ENCODE measurements at regions of chr2 and their contacts with region 1.

Region 1: GRCh38 chr2:50492477-50492851 is 539.5 kb downstream of the NRXN1 start:
- DNase-seq: peak in 10 of 35 experiments; percentile 0 to 53 (median 6)
- ATAC-seq: peak; percentile 31 to 65 (median 50)
- H3K4me3 ChIP-seq: no peak overlapping the region
- H3K4me3 Mint-ChIP-seq: peak overlapping the region in 1 of 3 donors; percentile 24
- H3K27ac ChIP-seq: no peak overlapping the region
- H3K27ac Mint-ChIP-seq: no peak overlapping the region
- H3K4me1 ChIP-seq: no peaks in the 10 kb centered on the region
- H3K4me1 Mint-ChIP-seq: peaks cover 6 to 22% (median 12%) of the 10 kb centered on the region in 3 donors
- H3K27me3 ChIP-seq: no peaks in the 10 kb centered on the region
- H3K27me3 Mint-ChIP-seq: peaks cover 3 to 5% of the 10 kb centered on the region in 2 donors

Region 2: GRCh38 chr2:48946449-48947048 is 1545.9 kb before region 1 on chr2:
- CTCF ChIA-PET with region 1: interaction called in 1 of 2 experiments, 12 read pairs
- POLR2A ChIA-PET with region 1: no interaction called
- DNase-seq: peak in 21 of 35 experiments; percentile 1 to 48 (median 12)
- ATAC-seq: peak; percentile 40 to 69 (median 60)
- H3K4me3 ChIP-seq: no peak overlapping the region
- H3K4me3 Mint-ChIP-seq: no peak overlapping the region
- H3K27ac ChIP-seq: no peak overlapping the region
- H3K27ac Mint-ChIP-seq: no peak overlapping the region
- H3K4me1 ChIP-seq: no peaks in the 10 kb centered on the region
- H3K4me1 Mint-ChIP-seq: no peaks in the 10 kb centered on the region
- H3K27me3 ChIP-seq: no peaks in the 10 kb centered on the region
- H3K27me3 Mint-ChIP-seq: no peaks in the 10 kb centered on the region

Region 3: DNA sequence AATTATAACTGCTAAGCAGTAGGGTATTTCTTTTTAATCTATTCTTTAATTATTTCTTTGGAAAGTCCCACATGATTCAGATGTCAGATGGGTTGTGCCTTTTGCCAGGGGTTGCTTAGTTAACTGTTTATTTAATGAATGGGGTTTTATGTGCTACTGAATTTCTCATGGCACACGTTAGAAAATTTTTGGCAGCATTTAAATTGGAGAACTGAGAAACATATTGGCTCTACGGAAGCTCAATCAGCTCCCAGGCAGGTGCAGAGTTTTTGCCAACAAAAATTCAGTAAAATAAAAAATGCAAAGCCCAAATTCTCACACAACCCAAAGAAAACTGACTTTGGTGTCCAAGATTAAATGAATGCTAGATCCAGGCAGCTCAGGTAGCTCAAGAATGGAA is 72.3 kb after region 1 on chr2:
- CTCF ChIA-PET with region 1: no interaction called
- POLR2A ChIA-PET with region 1: no interaction called
- DNase-seq: no peak
- ATAC-seq: no peak
- H3K4me3 ChIP-seq: no peak overlapping the region
- H3K4me3 Mint-ChIP-seq: no peak overlapping the region
- H3K27ac ChIP-seq: no peak overlapping the region
- H3K27ac Mint-ChIP-seq: no peak overlapping the region
- H3K4me1 ChIP-seq: no peaks in the 10 kb centered on the region
- H3K4me1 Mint-ChIP-seq: no peaks in the 10 kb centered on the region
- H3K27me3 ChIP-seq: no peaks in the 10 kb centered on the region
- H3K27me3 Mint-ChIP-seq: peaks cover 0 to 3% of the 10 kb centered on the region in 2 donors

Region 4: DNA sequence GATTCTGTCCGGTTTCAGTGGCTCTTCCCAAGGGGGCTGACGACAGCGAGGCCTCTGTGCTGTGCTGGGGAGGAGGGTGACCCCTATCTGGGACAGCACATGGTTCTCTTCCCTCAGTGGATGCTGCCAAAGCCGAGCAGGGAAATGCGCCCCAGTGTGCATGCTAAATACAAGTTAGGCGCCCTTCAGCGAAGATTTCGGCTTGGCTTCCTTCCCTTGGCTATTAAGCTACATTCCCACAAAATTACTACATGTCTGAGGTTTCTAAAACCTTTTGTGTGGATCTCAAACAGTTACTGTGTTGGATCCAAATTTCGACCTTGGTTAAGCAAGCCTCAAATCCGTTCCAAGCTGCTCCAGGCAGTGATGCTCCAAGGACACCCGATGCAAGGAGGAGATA is 99.2 kb after region 1 on chr2:
- CTCF ChIA-PET with region 1: no interaction called
- POLR2A ChIA-PET with region 1: no interaction called
- DNase-seq: no peak
- ATAC-seq: no peak
- H3K4me3 ChIP-seq: no peak overlapping the region
- H3K4me3 Mint-ChIP-seq: no peak overlapping the region
- H3K27ac ChIP-seq: no peak overlapping the region
- H3K27ac Mint-ChIP-seq: no peak overlapping the region
- H3K4me1 ChIP-seq: no peaks in the 10 kb centered on the region
- H3K4me1 Mint-ChIP-seq: no peaks in the 10 kb centered on the region
- H3K27me3 ChIP-seq: no peaks in the 10 kb centered on the region
- H3K27me3 Mint-ChIP-seq: no peaks in the 10 kb centered on the region

Region 5: DNA sequence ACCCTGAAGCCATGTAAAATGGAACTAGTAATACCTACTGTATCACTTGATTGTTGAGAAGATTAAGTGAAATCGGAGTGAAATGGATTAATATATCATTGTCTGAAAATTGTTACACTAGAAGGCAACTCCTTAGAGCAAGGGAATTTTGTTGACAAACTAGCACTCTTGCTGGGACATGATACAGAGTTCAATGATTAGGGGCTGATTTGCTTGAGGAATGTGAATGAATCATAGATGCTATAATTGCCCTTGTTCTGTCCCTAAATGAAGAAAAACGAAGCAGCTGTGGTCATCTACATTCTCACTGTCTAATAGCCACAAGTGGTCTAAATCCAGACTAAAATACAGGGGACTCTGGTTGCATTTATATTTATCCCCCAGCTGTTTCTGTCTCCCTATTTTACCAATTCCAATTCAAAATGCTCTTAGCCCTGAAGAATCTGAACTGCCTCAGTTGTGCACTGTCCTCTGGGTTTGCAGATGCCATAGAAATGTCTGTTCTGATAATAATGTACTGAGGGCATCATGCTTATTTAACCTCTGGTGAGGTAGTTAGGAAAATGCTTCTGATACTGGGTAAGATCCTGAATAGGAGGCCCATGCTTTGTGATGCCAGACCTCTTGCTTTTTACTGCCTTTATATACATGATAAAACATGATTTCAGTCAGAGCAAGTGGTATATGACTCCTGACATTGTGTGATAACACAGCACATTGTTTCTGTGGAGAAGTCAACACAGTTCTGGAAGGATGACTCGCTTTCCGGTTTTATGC is 157.3 kb after region 1 on chr2:
- CTCF ChIA-PET with region 1: no interaction called
- POLR2A ChIA-PET with region 1: no interaction called
- DNase-seq: no peak
- ATAC-seq: no peak
- H3K4me3 ChIP-seq: no peak overlapping the region
- H3K4me3 Mint-ChIP-seq: no peak overlapping the region
- H3K27ac ChIP-seq: no peak overlapping the region
- H3K27ac Mint-ChIP-seq: no peak overlapping the region
- H3K4me1 ChIP-seq: no peaks in the 10 kb centered on the region
- H3K4me1 Mint-ChIP-seq: no peaks in the 10 kb centered on the region
- H3K27me3 ChIP-seq: no peaks in the 10 kb centered on the region
- H3K27me3 Mint-ChIP-seq: no peaks in the 10 kb centered on the region

Measured in T-cell (primary cell).